ENCODE measurements at regions of chr10 and their contacts with region 1.

Region 1: GRCh38 chr10:57102234-57102633 is 741.2 kb upstream of the ZWINT start:
- DNase-seq: no peak
- ATAC-seq: no peak
- H3K4me3 ChIP-seq: no peak overlapping the region
- H3K27ac ChIP-seq: no peak overlapping the region
- H3K4me1 ChIP-seq: no peaks in the 10 kb centered on the region
- H3K27me3 ChIP-seq: no peaks in the 10 kb centered on the region
- CTCF ChIP-seq: no peak

Region 2: GRCh38 chr10:57014758-57015157 is 87.5 kb before region 1 on chr10:
- intact Hi-C with region 1: loop called in 1 of 10 experiments (anchors 5 kb)
- DNase-seq: no peak
- ATAC-seq: peak; percentile 71 to 94 (median 83)
- H3K4me3 ChIP-seq: peak overlapping the region in 4 of 10 donors; percentile 14 to 31 (median 26)
- H3K27ac ChIP-seq: peak overlapping the region in 3 of 10 donors; percentile 23 to 53 (median 44)
- H3K4me1 ChIP-seq: peaks cover 0 to 8% (median 0%) of the 10 kb centered on the region in 9 donors
- H3K27me3 ChIP-seq: no peaks in the 10 kb centered on the region
- CTCF ChIP-seq: no peak